Vagina (tissue), 2 donors: ENCODE measurements at regions of chr18 and their contacts with region 1.

Region 1: DNA sequence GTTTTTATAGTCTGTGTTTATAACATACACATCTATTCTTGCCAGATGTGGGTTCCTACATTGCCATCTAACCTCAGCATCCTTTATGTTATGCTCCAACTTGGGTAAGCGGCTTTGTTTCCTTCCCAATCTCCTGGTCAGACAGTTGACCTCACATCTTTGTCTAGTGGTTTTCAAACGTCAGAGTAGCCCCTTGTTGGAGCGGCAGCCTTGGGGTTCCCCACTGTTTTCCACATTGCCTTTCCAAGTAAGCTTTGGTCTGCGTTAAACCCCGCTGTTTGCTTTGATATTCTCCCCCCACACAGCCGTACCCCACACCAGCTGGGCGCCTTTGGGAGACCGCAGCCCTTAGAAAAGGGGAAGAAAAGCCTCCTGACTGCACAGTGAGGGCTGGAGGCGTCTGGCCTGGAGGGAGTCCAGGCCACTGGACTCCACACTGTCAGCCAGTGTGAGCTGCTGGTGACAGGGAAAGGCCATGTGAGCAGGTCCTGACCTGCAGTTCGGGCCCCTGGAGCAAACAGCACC is 83.3 kb downstream of the MALT1 start:
- DNase-seq: no peak
- H3K4me3 ChIP-seq: no peak overlapping the region
- H3K27ac ChIP-seq: no peak overlapping the region
- H3K4me1 ChIP-seq: peaks cover 17% of the 10 kb centered on the region
- H3K27me3 ChIP-seq: no peaks in the 10 kb centered on the region
- CTCF ChIP-seq: no peak
- POLR2A ChIP-seq: no peak

Region 2: GRCh38 chr18:58529714-58530354 is 224.8 kb before region 1 on chr18:
- intact Hi-C with region 1: loop called (anchors 10 kb)
- DNase-seq: no peak
- H3K4me3 ChIP-seq: no peak overlapping the region
- H3K27ac ChIP-seq: no peak overlapping the region
- H3K4me1 ChIP-seq: no peaks in the 10 kb centered on the region
- H3K27me3 ChIP-seq: no peaks in the 10 kb centered on the region
- CTCF ChIP-seq: peak; percentile 46 to 73 (median 63)
- POLR2A ChIP-seq: no peak

Region 3: DNA sequence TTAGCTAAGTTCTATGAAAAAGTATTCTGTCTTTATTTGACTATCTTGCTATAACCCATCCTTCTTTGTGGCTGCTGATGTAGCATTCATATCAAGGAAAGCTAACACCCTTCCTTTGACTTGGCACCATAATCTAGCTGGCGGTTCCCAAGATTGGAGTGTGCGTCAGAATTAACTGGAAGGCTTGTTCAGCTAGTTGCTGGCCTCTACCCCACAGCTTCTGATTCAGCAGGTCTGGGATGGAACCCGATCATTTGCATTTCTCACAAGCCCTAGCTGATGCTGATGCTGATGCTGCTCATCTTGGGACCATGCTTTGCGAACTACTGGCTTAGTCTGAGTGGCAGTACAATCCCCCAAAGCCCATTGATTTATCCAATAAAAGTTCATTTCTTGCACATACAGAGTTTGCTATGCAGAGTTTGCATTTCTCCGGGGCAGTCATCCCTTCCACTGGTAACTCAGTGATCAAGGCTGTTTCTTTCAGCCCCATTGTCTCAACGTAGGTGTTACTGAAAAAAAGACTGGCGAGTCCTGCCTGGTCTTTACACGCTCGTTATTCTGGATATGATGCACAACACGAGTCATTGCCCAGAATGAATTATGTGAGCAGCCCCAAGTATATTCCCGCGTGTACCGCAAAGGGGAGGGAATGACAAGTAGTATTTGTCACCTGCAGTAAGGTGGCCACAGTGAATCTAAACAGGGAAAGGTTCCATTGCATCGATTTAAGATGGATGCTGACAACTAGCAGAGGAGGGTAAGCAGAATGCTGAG is 206.5 kb after region 1 on chr18:
- intact Hi-C with region 1: no loop called
- DNase-seq: no peak
- H3K4me3 ChIP-seq: no peak overlapping the region
- H3K27ac ChIP-seq: no peak overlapping the region
- H3K4me1 ChIP-seq: peaks cover 10% of the 10 kb centered on the region
- H3K27me3 ChIP-seq: no peaks in the 10 kb centered on the region
- CTCF ChIP-seq: no peak
- POLR2A ChIP-seq: no peak